Gastrocnemius medialis (tissue), 4 donors: ENCODE measurements at regions of chr11 and their contacts with region 1.

Region 1: GRCh38 chr11:12122083-12122482 is 11.7 kb downstream of the MICAL2 start:
- DNase-seq: no peak
- ATAC-seq: no peak
- H3K4me3 ChIP-seq: no peak overlapping the region
- H3K27ac ChIP-seq: no peak overlapping the region
- H3K4me1 ChIP-seq: peaks cover 13 to 23% of the 10 kb centered on the region in 2 donors
- H3K27me3 ChIP-seq: no peaks in the 10 kb centered on the region
- CTCF ChIP-seq: peak in 2 of 5 experiments; percentile 16 to 53
- POLR2A ChIP-seq: no peak

Region 2: DNA sequence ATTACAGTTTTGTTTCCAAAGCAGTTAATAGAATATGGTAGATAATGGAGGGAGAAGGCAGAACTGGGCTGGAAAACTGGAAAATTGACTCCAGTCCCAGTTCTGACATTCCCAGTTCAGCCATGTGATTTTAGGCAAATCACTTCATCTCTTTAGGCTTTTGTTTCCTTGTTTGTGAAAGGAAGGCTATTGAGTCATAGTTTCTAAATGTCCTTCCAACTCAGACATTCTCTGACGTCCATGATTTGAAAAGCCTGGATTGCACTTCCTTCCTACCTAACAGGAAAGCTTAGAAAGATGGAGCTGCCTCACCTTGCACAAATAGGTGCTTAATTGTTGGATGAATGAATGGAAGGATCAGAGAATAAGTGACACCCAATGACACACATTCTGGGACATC is 480.5 kb before region 1 on chr11:
- in situ Hi-C with region 1: no loop called
- intact Hi-C with region 1: no loop called
- DNase-seq: no peak
- ATAC-seq: no peak
- H3K4me3 ChIP-seq: no peak overlapping the region
- H3K27ac ChIP-seq: peak overlapping the region in 2 of 4 donors; percentile 4 to 39
- H3K4me1 ChIP-seq: no peaks in the 10 kb centered on the region
- H3K27me3 ChIP-seq: no peaks in the 10 kb centered on the region
- CTCF ChIP-seq: no peak
- POLR2A ChIP-seq: no peak

Region 3: GRCh38 chr11:12182676-12183541 is 60.8 kb after region 1 on chr11:
- in situ Hi-C with region 1: no loop called
- intact Hi-C with region 1: no loop called
- DNase-seq: no peak
- ATAC-seq: peak; percentile 36 to 37
- H3K4me3 ChIP-seq: no peak overlapping the region
- H3K27ac ChIP-seq: peak overlapping the region in 3 of 4 donors; percentile 46 to 67 (median 60)
- H3K4me1 ChIP-seq: peaks cover 2 to 17% of the 10 kb centered on the region in 2 donors
- H3K27me3 ChIP-seq: no peaks in the 10 kb centered on the region
- CTCF ChIP-seq: no peak
- POLR2A ChIP-seq: no peak

Region 4: GRCh38 chr11:12224537-12224893 is 102.4 kb after region 1 on chr11:
- in situ Hi-C with region 1: no loop called
- intact Hi-C with region 1: loop called (anchors 5 kb)
- DNase-seq: peak; percentile 41 to 64
- ATAC-seq: peak in 1 of 2 donors; percentile 13
- H3K4me3 ChIP-seq: no peak overlapping the region
- H3K27ac ChIP-seq: no peak overlapping the region
- H3K4me1 ChIP-seq: peaks cover 30 to 31% of the 10 kb centered on the region in 2 donors
- H3K27me3 ChIP-seq: no peaks in the 10 kb centered on the region
- CTCF ChIP-seq: no peak
- POLR2A ChIP-seq: no peak